Pancreas (tissue), 10 donors: ENCODE measurements at regions of chr4 and their contacts with region 1.

Region 1: DNA sequence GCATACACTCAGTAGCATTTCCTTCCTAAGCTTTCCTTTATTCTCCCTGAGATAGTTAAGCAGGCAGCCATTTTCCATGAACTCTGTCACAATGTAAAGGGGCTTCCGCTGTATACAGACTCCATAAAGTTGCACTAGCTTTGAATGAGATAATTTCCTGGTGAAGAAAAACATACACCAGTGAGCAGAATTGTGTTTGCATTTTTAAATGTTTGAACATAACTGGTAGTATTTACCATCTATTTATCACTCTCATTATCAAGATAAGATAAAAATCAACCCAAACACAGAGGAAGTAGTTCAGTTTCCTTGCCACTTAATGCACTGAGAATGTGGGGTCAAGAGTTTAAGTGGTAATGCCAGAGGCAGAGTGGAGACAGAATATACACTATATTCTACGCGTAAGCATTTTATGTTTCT is 54.1 kb downstream of the TXK start:
- DNase-seq: no peak
- ATAC-seq: peak; percentile 51 to 62 (median 59)
- H3K4me3 ChIP-seq: no peak overlapping the region
- H3K27ac ChIP-seq: peak overlapping the region in 3 of 4 donors; percentile 2 to 32 (median 26)
- H3K4me1 ChIP-seq: no peaks in the 10 kb centered on the region
- H3K27me3 ChIP-seq: no peaks in the 10 kb centered on the region
- CTCF ChIP-seq: no peak

Region 2: GRCh38 chr4:47669946-47670345 is 410.0 kb before region 1 on chr4:
- intact Hi-C with region 1: loop called in 1 of 3 experiments (anchors 10 kb)
- DNase-seq: peak in 3 of 6 donors; percentile 13 to 35 (median 24)
- ATAC-seq: peak; percentile 83 to 89 (median 88)
- H3K4me3 ChIP-seq: no peak overlapping the region
- H3K27ac ChIP-seq: no peak overlapping the region
- H3K4me1 ChIP-seq: no peaks in the 10 kb centered on the region
- H3K27me3 ChIP-seq: no peaks in the 10 kb centered on the region
- CTCF ChIP-seq: no peak

Region 3: DNA sequence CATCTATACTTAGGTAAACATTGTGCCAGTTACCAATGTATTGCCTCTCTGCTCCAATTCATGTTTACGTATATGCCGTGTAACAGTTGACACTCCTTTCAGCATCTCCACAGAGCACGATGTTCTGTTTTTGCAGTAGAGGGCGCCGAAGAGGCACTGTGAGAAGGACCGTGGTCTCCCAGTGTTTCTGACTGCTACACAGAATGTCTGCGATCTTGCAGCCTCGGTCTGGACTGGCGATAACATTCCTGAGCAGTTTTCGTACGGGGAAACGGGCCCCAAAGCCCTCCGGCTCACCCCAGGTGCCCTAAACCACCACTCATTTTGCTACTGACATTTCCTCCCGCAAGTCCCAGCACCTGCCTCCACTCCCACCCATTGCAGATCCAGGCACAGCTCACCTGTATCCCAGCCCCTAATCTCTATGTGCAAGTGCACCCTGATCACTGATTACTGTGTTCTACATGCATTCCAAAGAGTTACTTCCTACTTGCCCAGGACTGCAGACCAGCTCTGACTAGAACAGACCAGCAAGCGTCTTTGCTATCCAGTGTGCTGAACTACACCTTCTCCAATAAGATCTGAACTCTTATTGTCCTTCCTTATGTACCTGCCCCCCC is 153.2 kb before region 1 on chr4:
- intact Hi-C with region 1: loop called in 2 of 3 experiments (anchors 10 kb)
- DNase-seq: peak; percentile 30 to 67 (median 52)
- ATAC-seq: peak; percentile 91 to 99 (median 98)
- H3K4me3 ChIP-seq: peak overlapping the region in 2 of 4 donors; percentile 21 to 44
- H3K27ac ChIP-seq: peak overlapping the region in 3 of 4 donors; percentile 39 to 53 (median 46)
- H3K4me1 ChIP-seq: peaks cover 6 to 13% (median 7%) of the 10 kb centered on the region in 3 donors
- H3K27me3 ChIP-seq: no peaks in the 10 kb centered on the region
- CTCF ChIP-seq: peak; percentile 37 to 56 (median 49)

Region 4: DNA sequence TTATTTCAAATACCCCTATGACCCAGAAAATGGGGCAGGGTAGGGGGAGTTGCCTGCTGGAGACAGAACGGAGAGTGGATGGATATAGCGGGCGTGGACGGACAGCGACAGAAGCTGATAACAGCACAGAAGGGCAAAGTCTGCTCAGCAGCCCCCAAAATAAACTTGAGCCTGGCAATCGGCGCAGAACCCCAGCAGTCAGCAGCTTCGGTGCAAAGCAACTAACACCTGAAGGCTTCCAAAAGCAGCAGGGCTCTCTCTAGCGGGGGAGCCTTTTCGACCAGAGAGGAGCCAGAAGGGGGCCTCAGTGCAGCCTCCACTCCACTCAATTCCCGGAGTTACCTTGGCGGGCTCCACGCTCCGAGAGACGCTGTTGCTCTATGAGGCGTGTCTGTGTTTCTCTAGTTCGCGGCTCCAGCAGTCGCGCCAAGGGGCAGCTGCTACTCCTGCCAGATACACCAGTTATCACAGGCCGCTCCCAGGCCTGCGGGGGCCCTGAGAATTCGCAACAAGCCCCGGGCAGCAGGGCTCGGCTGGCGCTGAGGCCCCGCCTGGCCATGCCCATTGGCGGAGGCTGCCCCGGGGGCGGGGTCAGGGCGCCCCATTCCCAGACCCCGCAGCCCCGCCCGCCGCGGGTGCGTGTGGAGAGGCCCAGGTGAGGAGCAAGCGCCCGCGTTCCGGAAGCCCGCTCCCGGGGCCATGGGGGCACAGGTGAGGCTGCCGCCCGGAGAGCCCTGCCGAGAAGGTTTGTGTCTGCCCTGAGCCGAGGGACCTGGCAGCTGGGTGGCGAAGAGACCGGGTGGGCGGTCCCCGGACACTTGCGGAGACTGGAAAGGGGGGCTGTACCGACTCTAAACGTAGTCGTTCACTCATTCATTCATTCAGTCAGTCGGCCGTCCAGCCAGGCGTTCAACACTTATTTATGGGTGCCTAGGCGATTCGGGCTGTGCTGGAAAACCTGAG is 63.6 kb before region 1 on chr4 and contains the starts of genes CNGA1 and NIPAL1:
- intact Hi-C with region 1: loop called in 1 of 3 experiments (anchors 10 kb)
- DNase-seq: peak; percentile 86 to 96 (median 90)
- ATAC-seq: peak; percentile 98 to 99 (median 98)
- H3K4me3 ChIP-seq: peak within 1 kb of the TSS; percentile 59 to 71 (median 66)
- H3K27ac ChIP-seq: peak within 1 kb of the TSS; percentile 43 to 86 (median 68)
- H3K4me1 ChIP-seq: no peaks in the 10 kb centered on the region
- H3K27me3 ChIP-seq: no peaks in the 10 kb centered on the region
- CTCF ChIP-seq: no peak
- total RNA-seq, gene CNGA1: 0.67 to 3.2 (median 1.3) TPM
- total RNA-seq, gene NIPAL1: 2.2 to 4.4 (median 2.5) TPM

Region 5: GRCh38 chr4:48396043-48396442 is 316.1 kb after region 1 on chr4:
- intact Hi-C with region 1: no loop called
- DNase-seq: no peak
- ATAC-seq: peak in 2 of 4 donors; percentile 36 to 50
- H3K4me3 ChIP-seq: no peak overlapping the region
- H3K27ac ChIP-seq: no peak overlapping the region
- H3K4me1 ChIP-seq: peaks cover 0 to 5% (median 0%) of the 10 kb centered on the region in 3 donors
- H3K27me3 ChIP-seq: no peaks in the 10 kb centered on the region
- CTCF ChIP-seq: no peak